Transverse colon (tissue), 4 donors: ENCODE measurements at regions of chr9 and their contacts with region 1.

Region 1: DNA sequence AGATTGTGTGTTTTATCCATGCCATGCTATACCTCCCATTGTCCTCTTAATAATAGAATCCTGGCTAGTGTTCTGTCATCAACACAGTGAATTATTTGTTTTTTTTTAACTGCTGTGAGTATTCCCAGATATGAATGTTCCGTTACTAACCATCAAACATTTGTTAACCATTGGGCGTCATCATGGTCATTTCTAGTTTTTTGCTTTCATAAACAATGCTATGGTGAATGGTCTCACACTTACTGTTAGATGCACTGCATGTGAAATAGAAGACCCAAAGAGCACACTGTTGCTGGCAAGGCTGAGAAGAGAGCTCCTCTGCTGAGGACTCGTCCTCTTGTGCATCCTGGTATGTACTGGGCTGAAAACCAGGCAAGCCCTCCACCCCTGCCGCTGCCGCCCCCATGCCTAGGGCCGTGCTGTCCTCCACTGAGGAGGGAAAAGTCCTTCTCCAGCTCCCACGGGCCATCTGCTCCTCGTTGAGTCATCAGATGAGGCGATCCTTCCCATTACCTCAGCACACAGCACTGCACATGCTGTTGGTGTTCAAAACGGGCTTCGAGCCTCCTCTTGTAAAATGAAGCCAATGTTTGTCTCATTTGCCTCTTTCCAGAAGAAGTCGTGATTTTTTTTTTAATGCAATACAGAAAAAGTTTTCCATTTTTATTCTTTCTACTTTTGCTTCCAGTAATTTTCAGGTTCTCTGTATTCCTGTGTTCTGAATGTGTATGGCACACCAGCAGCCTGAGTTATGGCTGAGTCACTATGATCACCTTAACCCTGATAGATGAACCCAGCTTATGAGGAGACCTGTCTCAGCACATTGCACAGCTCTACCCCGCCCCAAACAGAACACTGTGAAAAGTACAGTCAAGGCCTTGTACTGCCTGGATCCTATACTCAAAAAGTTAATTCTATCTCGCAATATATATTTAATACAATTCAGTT is 219.0 kb downstream of the AOPEP start:
- DNase-seq: peak; percentile 39
- H3K4me3 ChIP-seq: no peak overlapping the region
- H3K27ac ChIP-seq: peak overlapping the region; percentile 43 to 71 (median 55)
- H3K4me1 ChIP-seq: peaks cover 11 to 44% (median 22%) of the 10 kb centered on the region in 4 donors
- H3K27me3 ChIP-seq: no peaks in the 10 kb centered on the region
- CTCF ChIP-seq: no peak
- EP300 ChIP-seq: no peak
- POLR2A ChIP-seq: no peak

Region 2: GRCh38 chr9:94847486-94847885 is 98.0 kb before region 1 on chr9:
- in situ Hi-C with region 1: loop called in 1 of 4 experiments (anchors 25 kb)
- intact Hi-C with region 1: no loop called
- DNase-seq: no peak
- H3K4me3 ChIP-seq: no peak overlapping the region
- H3K27ac ChIP-seq: no peak overlapping the region
- H3K4me1 ChIP-seq: no peaks in the 10 kb centered on the region
- H3K27me3 ChIP-seq: no peaks in the 10 kb centered on the region
- CTCF ChIP-seq: no peak
- EP300 ChIP-seq: no peak
- POLR2A ChIP-seq: no peak

Region 3: GRCh38 chr9:94967482-94967881 is 22.0 kb after region 1 on chr9:
- in situ Hi-C with region 1: no loop called
- intact Hi-C with region 1: no loop called
- DNase-seq: no peak
- H3K4me3 ChIP-seq: no peak overlapping the region
- H3K27ac ChIP-seq: no peak overlapping the region
- H3K4me1 ChIP-seq: no peaks in the 10 kb centered on the region
- H3K27me3 ChIP-seq: no peaks in the 10 kb centered on the region
- CTCF ChIP-seq: no peak
- EP300 ChIP-seq: no peak
- POLR2A ChIP-seq: no peak